HCT116 (cell line): ENCODE measurements at regions of chr4 and their contacts with region 1.

Region 1: GRCh38 chr4:32775032-32775431 is 2054.9 kb downstream of the PCDH7 start:
- DNase-seq: peak; percentile 69
- ATAC-seq: peak; percentile 98
- H3K4me3 ChIP-seq: no peak overlapping the region
- H3K27ac ChIP-seq: no peak overlapping the region
- H3K4me1 ChIP-seq: peaks cover 0 to 4% of the 10 kb centered on the region in 2 experiments; a peak in 1 of 4 replicates
- H3K27me3 ChIP-seq: no peaks in the 10 kb centered on the region
- CTCF ChIP-seq: peak; percentile 40 to 68 (median 62); a peak in 5 of 6 replicates
- POLR2A ChIP-seq: no peak
- RAD21 ChIP-seq: peak; percentile 78

Region 2: GRCh38 chr4:32462944-32463343 is 312.1 kb before region 1 on chr4:
- CTCF ChIA-PET with region 1: no interaction called
- POLR2A ChIA-PET with region 1: no interaction called
- RAD21 ChIA-PET with region 1: no interaction called
- intact Hi-C with region 1: loop called (anchors 1 kb)
- DNase-seq: peak; percentile 27
- ATAC-seq: peak; percentile 49; the same call in 1 of the 2 replicates
- H3K4me3 ChIP-seq: no peak overlapping the region
- H3K27ac ChIP-seq: no peak overlapping the region
- H3K4me1 ChIP-seq: no peaks in the 10 kb centered on the region
- H3K27me3 ChIP-seq: no peaks in the 10 kb centered on the region
- CTCF ChIP-seq: peak; percentile 39 to 60 (median 56); a peak in 5 of 6 replicates
- POLR2A ChIP-seq: no peak
- RAD21 ChIP-seq: peak; percentile 47; the same call in 1 of the 2 replicates

Region 3: DNA sequence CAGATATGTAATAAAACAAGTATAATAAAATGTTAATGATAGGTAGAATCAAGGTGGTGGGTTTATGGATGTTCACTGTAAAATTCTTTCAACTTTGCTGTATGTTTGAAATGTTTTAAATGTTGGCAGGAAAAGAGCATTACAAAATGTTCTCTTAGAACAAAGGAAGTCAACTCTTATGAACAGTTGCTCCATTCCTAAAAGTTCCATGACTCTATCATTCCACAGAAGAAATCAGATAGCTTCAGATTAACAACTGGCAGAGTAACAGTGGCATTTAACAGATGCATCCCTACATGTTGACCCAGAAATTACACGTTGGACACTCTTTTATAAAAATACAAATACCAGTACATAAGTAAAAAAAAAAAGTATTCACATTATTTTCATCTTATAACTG is 1445.6 kb after region 1 on chr4:
- CTCF ChIA-PET with region 1: no interaction called
- POLR2A ChIA-PET with region 1: no interaction called
- RAD21 ChIA-PET with region 1: no interaction called
- intact Hi-C with region 1: no loop called
- DNase-seq: no peak
- ATAC-seq: no peak
- H3K4me3 ChIP-seq: no peak overlapping the region
- H3K27ac ChIP-seq: no peak overlapping the region
- H3K4me1 ChIP-seq: no peaks in the 10 kb centered on the region
- H3K27me3 ChIP-seq: no peaks in the 10 kb centered on the region
- CTCF ChIP-seq: no peak
- POLR2A ChIP-seq: no peak
- RAD21 ChIP-seq: no peak